Heart left ventricle (tissue), 16 donors: ENCODE measurements at regions of chr3 and their contacts with region 1.

Region 1: DNA sequence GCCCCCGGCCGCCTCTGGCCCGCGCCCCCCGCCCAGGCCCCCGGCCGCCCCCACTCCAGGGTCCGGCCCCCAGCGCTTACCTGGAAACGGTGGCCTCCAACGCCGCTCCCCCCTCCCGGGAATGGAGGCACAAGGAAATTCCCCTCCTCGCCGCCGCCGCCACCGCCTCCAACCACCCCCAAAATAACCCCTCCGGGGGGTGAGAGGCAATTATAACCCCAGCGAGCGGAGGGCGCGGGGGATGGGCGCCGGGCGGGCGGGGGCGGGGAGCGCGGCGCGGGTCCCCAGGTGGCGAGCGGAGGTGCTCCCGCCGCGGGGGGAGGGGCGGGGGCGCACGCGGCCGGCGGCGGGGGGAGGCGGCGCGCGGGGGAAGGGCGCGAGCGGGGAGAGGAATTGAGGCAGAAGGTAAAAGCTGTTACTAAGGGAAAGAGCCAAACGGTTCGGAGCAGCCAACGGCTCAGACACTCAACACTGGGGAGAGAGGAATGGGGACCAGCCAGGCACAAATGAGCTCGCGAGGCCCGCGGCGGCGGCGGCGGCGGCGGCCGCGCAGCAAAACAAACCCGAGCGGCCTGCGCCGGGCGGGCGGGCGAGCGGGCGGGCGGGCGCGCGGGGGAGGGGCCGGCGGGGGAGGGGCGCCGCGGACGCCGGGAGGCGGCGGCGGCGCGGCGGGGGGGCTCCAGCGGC is at the start of gene TBL1XR1:
- DNase-seq: peak; percentile 92 to 95 (median 95)
- ATAC-seq: peak; percentile 81 to 92 (median 89)
- H3K4me3 ChIP-seq: peak within 1 kb of the TSS; percentile 72 to 96 (median 90)
- H3K27ac ChIP-seq: peak within 1 kb of the TSS; percentile 96 to 99 (median 98)
- H3K4me1 ChIP-seq: peaks cover 0 to 58% (median 23%) of the 10 kb centered on the region in 12 donors
- H3K27me3 ChIP-seq: no peaks in the 10 kb centered on the region
- CTCF ChIP-seq: no peak
- POLR2A ChIP-seq: no peak
- total RNA-seq, gene TBL1XR1: 50.0 to 176 (median 120) TPM

Region 2: DNA sequence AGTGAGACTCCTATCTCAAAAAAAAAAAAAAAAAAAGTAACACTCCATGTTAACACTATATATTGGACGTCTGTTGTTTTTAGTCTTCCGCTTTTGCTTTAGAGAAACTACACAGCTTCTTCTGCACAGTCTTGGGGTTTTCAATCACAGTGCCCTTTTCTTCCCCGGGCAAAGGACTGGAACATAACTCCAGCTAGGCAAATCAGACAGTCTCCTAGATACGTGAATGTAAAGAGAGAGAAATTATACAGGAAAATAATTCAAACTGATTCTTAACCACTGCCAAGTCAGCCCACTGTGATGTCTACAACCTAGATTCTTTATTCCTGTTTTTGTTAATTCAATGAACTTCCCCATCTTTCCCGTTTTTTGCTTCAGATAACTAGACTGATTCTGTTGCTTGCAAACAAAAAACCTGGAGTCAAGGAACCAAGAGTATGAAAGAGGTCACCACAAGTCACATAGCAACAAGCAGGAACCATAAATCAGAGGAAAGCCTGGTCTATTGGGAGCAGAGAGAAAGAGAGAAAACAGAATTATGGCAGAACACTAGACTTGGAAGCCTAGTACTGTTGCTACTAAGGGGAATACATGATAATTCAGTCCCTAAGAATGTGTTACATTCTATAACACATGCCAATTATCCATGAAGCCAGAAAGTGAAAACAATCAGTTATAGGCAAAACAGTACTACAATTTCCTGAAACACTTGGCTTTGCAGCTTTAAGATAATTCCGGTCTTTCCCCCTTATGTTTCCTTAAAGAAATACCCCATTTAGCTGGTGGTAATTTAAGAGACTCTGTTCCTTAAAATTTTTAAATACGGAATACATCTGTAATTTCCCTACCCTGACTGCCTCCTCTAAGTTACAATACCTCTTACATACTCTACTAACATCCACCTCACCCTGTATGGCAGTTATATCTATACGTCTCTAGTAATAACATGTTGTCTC is 63.0 kb before region 1 on chr3:
- intact Hi-C with region 1: loop called in 3 of 10 experiments (anchors 5 to 10 kb)
- DNase-seq: no peak
- ATAC-seq: no peak
- H3K4me3 ChIP-seq: no peak overlapping the region
- H3K27ac ChIP-seq: peak overlapping the region in 1 of 12 donors; percentile 46
- H3K4me1 ChIP-seq: peaks cover 0 to 58% (median 28%) of the 10 kb centered on the region in 12 donors
- H3K27me3 ChIP-seq: no peaks in the 10 kb centered on the region
- CTCF ChIP-seq: no peak
- POLR2A ChIP-seq: no peak

Region 3: DNA sequence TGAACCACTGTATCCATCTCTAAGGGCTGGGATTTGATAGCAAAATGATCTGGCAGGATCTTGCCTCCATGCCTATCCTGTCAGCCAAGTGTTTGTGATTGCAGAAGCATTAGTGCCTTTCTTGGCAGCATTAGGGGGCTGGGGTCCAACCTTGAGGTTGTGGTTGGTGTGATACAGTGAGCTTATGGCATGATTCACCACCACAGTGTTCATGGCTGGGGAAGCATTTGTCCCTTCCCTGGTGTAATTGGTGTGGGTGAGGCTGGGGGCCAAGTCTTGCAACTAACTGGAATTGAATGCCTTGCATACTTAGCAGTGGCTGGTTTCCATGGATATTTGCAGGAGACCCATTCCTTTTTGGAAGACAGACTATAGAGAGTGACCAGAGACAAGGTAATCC is 271.1 kb after region 1 on chr3:
- intact Hi-C with region 1: loop called in 2 of 10 experiments (anchors 10 kb)
- DNase-seq: peak in 2 of 5 donors; percentile 42 to 70
- ATAC-seq: peak in 3 of 4 donors; percentile 34 to 77 (median 62)
- H3K4me3 ChIP-seq: no peak overlapping the region
- H3K27ac ChIP-seq: peak overlapping the region in 1 of 12 donors; percentile 7
- H3K4me1 ChIP-seq: peaks cover 0 to 22% (median 6%) of the 10 kb centered on the region in 12 donors
- H3K27me3 ChIP-seq: no peaks in the 10 kb centered on the region
- CTCF ChIP-seq: no peak
- POLR2A ChIP-seq: no peak

Region 4: DNA sequence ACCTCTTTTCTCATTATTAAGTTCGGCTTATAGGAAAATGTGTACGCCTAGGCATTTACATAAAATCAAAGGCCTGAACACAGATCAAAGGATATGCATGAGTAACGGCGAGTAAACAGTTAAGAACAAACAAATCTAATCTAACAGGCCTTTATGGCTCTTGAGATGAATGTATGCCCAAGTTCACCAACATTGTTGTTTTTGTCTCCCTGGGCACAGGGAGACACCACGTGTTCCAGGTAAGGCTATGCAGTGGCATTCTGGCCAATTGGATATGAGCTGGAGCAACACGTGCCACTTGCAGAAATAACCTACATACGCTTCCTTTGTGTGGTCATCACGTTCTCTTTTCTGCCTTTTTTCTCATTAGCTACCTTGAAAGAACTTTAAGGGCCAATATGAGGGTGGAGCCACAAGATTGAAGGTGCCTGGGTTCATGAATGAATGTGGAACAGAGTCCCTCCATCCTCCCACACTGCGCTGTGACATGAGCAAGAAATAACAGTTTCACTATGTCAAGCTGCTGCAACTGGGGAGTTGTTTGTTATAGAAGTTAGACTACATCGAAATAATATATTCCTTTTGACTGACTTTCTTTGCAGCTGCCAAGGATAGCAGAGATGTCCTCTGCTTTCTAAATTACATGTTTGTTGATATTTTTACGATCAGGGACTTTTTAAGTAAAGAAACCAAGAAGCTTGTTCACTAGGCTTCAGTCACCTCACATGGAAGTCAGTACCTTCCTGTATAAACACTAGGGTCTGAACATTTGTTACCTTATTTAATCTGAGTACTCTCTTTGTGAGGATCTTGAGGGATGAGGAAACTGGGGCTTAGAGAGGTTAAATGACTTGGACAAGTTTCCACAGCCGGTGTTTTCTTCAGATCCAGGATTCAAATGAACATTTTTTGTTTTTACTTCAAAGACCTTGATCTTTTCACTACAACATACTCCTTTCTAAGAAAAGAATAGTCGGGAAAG is 427.6 kb after region 1 on chr3:
- intact Hi-C with region 1: loop called in 1 of 10 experiments (anchors 5 kb)
- DNase-seq: no peak
- ATAC-seq: no peak
- H3K4me3 ChIP-seq: no peak overlapping the region
- H3K27ac ChIP-seq: no peak overlapping the region
- H3K4me1 ChIP-seq: peaks cover 0 to 19% (median 12%) of the 10 kb centered on the region in 12 donors
- H3K27me3 ChIP-seq: no peaks in the 10 kb centered on the region
- CTCF ChIP-seq: no peak
- POLR2A ChIP-seq: no peak

Region 5: DNA sequence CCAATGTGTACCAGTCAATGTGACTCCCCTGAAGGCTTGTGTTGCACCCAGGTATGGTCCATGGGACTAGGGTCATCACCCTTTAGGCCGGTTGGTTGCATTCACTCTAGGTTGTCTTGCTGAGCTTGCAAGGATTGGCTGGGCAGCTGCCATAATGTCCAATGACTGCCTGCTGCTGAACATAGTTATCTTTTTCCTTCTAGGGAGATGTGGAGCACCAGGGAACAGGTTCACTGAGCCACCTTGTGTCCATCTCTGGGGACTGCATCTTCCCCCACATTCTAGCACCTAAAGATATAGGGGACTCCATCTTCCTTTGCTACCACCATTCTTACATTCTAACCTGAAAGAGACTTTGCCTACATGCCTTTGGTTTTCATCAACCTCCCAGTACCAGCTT is 580.5 kb after region 1 on chr3:
- intact Hi-C with region 1: loop called in 3 of 10 experiments (anchors 5 to 10 kb)
- DNase-seq: peak in 4 of 5 donors; percentile 25 to 52 (median 36)
- ATAC-seq: peak in 2 of 4 donors; percentile 26 to 47
- H3K4me3 ChIP-seq: no peak overlapping the region
- H3K27ac ChIP-seq: no peak overlapping the region
- H3K4me1 ChIP-seq: peaks cover 0 to 67% (median 29%) of the 10 kb centered on the region in 12 donors
- H3K27me3 ChIP-seq: no peaks in the 10 kb centered on the region
- CTCF ChIP-seq: peak; percentile 37 to 65 (median 54)
- POLR2A ChIP-seq: no peak

Region 6: DNA sequence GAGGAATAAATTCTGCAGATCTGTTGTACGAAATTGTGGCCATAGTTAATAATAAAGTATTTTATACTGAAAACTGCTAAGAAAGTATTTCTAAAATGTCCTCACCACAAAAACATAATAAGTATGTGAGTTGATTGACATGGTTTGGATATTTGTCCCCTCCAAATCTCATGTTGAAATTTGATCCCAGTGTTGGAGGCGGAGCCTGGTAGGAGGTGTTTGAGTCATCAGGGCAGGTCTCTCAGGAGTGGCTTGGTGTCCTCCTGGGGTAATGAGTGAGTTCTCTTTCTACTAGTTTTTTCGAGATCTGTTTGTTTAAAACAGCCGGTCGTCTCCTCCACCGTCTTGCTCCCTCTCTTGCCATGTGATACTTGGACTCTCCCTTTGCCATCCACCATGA is 915.0 kb after region 1 on chr3:
- intact Hi-C with region 1: no loop called
- DNase-seq: no peak
- ATAC-seq: no peak
- H3K4me3 ChIP-seq: no peak overlapping the region
- H3K27ac ChIP-seq: no peak overlapping the region
- H3K4me1 ChIP-seq: no peaks in the 10 kb centered on the region
- H3K27me3 ChIP-seq: no peaks in the 10 kb centered on the region
- CTCF ChIP-seq: no peak
- POLR2A ChIP-seq: no peak